ENCODE measurements at regions of chr18 and their contacts with region 1.

Region 1: GRCh38 chr18:35580701-35581539 is 620 bp upstream of the GALNT1 start:
- DNase-seq: peak; percentile 68 to 88 (median 85)
- ATAC-seq: peak; percentile 85 to 90
- H3K4me3 ChIP-seq: peak overlapping the region; percentile 80
- H3K27ac ChIP-seq: peak overlapping the region; percentile 63
- H3K4me1 ChIP-seq: no peaks in the 10 kb centered on the region
- H3K27me3 ChIP-seq: no peaks in the 10 kb centered on the region

Region 2: GRCh38 chr18:35407871-35408481 is 172.9 kb before region 1 on chr18:
- intact Hi-C with region 1: loop called in 1 of 4 experiments (anchors 5 kb)
- DNase-seq: no peak
- ATAC-seq: peak; percentile 77 to 85
- H3K4me3 ChIP-seq: no peak overlapping the region
- H3K27ac ChIP-seq: no peak overlapping the region
- H3K4me1 ChIP-seq: peaks cover 5% of the 10 kb centered on the region
- H3K27me3 ChIP-seq: no peaks in the 10 kb centered on the region

Region 3: DNA sequence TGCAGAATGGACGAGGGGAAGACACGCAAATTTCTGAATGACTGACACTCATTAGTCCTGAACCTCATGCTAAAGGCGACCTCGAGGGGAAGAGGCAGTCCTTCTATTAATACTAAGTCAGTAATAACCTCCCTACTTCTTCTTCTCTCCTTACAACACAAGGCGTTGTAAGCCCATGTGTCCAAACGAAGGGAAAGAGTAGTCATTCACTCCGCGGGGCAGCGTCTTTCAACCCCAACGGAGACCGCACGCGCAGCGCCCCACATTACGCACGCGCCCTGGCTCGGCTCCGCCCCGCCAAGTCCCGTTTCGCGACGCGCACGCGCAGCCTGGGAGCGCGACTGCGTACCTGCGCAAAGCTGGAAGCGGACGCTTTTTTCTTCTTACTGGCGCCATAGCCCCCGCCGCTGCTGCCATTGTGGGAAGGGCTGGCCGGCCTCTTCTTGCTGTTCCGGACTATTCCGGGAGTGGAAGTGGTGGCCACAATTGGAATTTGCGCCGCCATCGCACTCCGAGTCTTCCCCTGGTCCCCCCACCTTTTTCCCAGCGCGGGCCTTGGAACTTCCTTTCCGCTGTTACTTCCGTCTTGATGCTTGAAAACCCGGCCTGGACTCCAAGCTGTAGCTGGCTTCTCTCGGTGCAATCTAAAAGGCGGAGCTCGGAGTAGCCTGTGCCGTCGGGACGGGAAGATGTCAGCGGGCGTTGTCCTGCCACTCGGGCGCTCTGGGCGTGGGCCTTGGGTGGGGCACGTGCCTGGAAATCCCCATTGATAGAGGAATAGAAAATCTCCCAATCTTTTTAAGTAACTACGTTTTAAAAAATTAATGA is 83.3 kb before region 1 on chr18 and contains the start of gene INO80C:
- intact Hi-C with region 1: loop called in 2 of 4 experiments (anchors 5 to 10 kb)
- DNase-seq: peak; percentile 94 to 97 (median 97)
- ATAC-seq: peak; percentile 99
- H3K4me3 ChIP-seq: peak within 1 kb of the TSS; percentile 65
- H3K27ac ChIP-seq: peak within 1 kb of the TSS; percentile 99
- H3K4me1 ChIP-seq: peaks cover 4% of the 10 kb centered on the region
- H3K27me3 ChIP-seq: no peaks in the 10 kb centered on the region
- total RNA-seq, gene INO80C: 25.4 to 27.2 (median 26.0) TPM

Region 4: DNA sequence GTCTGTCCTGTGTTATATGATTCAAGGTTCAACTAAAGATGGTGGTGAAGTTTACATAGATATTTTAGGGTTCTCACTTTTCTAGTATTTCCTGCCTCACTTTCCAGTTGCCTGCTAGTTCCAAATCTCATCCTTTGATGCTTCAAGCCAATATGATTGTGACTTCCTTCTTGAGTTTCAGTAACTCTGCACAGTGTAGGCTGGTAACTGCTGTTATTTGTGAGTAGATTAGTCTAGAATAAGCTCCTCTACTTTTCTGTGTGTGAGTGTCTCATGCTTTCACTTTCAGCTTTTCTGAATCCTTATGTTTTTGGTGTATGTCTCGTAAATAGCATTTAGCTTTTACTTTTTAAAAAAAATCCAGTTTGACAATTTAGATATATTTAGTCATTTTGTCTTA is 43.2 kb after region 1 on chr18:
- intact Hi-C with region 1: no loop called
- DNase-seq: no peak
- ATAC-seq: no peak
- H3K4me3 ChIP-seq: no peak overlapping the region
- H3K27ac ChIP-seq: no peak overlapping the region
- H3K4me1 ChIP-seq: peaks cover 4% of the 10 kb centered on the region
- H3K27me3 ChIP-seq: no peaks in the 10 kb centered on the region

Region 5: GRCh38 chr18:35688757-35689156 is 107.8 kb after region 1 on chr18:
- intact Hi-C with region 1: loop called in 1 of 4 experiments (anchors 10 kb)
- DNase-seq: no peak
- ATAC-seq: no peak
- H3K4me3 ChIP-seq: no peak overlapping the region
- H3K27ac ChIP-seq: no peak overlapping the region
- H3K4me1 ChIP-seq: no peaks in the 10 kb centered on the region
- H3K27me3 ChIP-seq: no peaks in the 10 kb centered on the region

Measured in right cardiac atrium (tissue), 5 donors.